Common myeloid progenitor, CD34-positive (primary cell): ENCODE measurements at regions of chr3 and their contacts with region 1.

Region 1: DNA sequence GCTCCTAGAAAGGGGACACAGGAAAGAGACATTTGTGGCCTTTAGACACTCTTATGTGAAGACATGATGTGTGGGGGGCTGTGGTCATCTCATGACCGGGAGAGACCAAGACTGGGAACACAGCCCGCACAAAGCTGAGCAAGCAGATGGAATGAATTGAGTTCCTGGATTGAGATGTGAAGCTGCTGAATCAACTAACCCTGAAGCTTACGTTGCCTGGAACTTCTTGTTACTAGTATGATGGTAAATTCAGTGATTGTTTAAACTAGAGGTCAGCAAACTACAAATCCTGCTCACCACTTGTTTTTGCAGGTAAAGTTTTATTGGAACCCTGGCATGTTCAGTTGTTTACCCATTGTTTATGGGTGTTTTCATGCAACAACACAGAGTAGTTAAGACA is 83.4 kb upstream of the BHLHE40 start:
- DNase-seq: no peak
- H3K4me3 ChIP-seq: no peak overlapping the region
- H3K27ac ChIP-seq: no peak overlapping the region
- H3K4me1 ChIP-seq: peaks cover 0 to 8% (median 0%) of the 10 kb centered on the region in 4 experiments
- H3K27me3 ChIP-seq: no peaks in the 10 kb centered on the region

Region 2: GRCh38 chr3:4756855-4757574 is 138.8 kb before region 1 on chr3:
- CTCF ChIA-PET with region 1: no interaction called
- POLR2A ChIA-PET with region 1: no interaction called
- DNase-seq: no peak
- H3K4me3 ChIP-seq: no peak overlapping the region
- H3K27ac ChIP-seq: no peak overlapping the region
- H3K4me1 ChIP-seq: peaks cover 16 to 79% (median 55%) of the 10 kb centered on the region in 4 experiments
- H3K27me3 ChIP-seq: no peaks in the 10 kb centered on the region

Region 3: GRCh38 chr3:4826237-4827100 is 69.4 kb before region 1 on chr3:
- CTCF ChIA-PET with region 1: no interaction called
- POLR2A ChIA-PET with region 1: no interaction called
- DNase-seq: no peak
- H3K4me3 ChIP-seq: no peak overlapping the region
- H3K27ac ChIP-seq: no peak overlapping the region
- H3K4me1 ChIP-seq: peaks cover 26 to 70% (median 57%) of the 10 kb centered on the region in 4 experiments
- H3K27me3 ChIP-seq: no peaks in the 10 kb centered on the region

Region 4: GRCh38 chr3:4906107-4906621 is 10.3 kb after region 1 on chr3:
- CTCF ChIA-PET with region 1: interaction called, 19 read pairs
- POLR2A ChIA-PET with region 1: no interaction called
- DNase-seq: peak in 1 of 3 donors; percentile 19
- H3K4me3 ChIP-seq: no peak overlapping the region
- H3K27ac ChIP-seq: no peak overlapping the region
- H3K4me1 ChIP-seq: peaks cover 3 to 18% (median 13%) of the 10 kb centered on the region in 4 experiments
- H3K27me3 ChIP-seq: no peaks in the 10 kb centered on the region

Region 5: DNA sequence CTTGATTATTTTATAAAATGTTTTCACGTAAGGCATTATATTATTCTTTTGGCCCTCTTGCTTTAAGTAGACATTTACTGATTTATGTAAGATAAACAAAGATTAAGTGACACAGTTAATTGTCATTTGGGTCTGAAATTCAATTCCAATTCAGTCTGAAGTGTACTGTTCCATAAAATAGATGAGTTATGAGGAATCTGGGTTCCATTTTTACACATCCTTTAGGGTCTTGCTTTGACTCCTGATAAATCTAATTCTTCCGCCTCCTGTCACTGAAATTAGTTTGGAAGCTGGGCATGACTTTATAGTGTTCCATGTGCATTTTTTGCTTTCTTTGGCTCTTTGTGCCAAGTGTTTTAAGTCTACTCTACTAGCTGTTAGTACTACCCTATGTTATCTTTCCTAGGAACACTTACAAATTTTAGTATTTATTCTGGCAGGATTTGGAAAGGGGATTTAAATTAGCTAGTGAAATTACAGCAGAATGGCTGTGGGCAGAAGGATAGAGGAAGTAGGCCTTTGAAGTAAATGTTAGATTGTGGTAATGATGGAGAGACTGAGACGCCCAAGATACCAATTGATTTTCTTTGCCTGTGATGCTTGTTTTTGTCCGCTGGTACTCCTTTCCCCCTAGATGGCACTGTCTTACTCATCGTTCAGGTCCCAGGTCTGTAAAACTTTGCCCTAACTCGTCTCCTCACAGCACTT is 240.5 kb after region 1 on chr3:
- CTCF ChIA-PET with region 1: no interaction called
- POLR2A ChIA-PET with region 1: no interaction called
- DNase-seq: peak; percentile 75 to 90 (median 88)
- H3K4me3 ChIP-seq: no peak overlapping the region
- H3K27ac ChIP-seq: peak overlapping the region in 1 of 2 experiments; percentile 27
- H3K4me1 ChIP-seq: peaks cover 10 to 28% (median 23%) of the 10 kb centered on the region in 4 experiments
- H3K27me3 ChIP-seq: no peaks in the 10 kb centered on the region